Testis (tissue), 5 donors: ENCODE measurements at regions of chr16 and their contacts with region 1.

Region 1: DNA sequence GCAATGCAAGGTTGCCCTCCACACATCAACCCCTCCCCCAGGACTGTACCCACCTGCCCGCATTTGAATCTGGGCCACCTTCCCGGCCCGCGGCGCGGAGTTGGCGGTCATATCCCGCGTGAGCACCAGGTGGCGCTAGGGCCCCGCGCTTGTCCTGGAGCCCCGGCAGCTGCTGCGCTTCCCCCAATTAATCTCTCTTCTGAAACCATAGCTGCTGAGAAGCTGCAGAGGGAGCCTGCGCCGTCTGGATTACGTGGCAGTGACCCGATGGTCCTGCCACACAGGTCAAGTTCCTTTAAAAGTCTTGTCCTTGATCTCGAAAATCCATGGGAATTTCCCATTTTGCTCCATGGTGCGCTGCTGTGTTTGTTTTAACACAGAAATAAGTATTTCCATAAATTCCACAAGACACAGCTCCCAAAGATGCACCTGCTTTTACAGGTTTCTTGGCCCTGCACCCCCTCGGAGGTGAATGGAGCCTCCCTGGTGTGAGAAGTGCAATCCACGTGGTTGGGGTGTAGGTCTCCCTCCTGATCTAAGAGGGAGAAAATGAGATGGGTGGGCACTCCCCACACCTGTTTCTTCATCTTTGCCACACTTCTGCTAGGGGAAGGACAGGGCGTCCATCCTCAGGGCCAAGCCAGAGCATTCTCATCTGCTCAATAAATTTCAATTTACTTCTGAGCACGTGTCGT is 22.1 kb downstream of the COX4I1 start:
- DNase-seq: peak; percentile 88
- H3K4me3 ChIP-seq: no peak overlapping the region
- H3K27ac ChIP-seq: no peak overlapping the region
- H3K4me1 ChIP-seq: no peaks in the 10 kb centered on the region
- H3K27me3 ChIP-seq: no peaks in the 10 kb centered on the region
- CTCF ChIP-seq: peak; percentile 95 to 98 (median 96)
- POLR2A ChIP-seq: no peak

Region 2: GRCh38 chr16:85898521-85899442 is 77.2 kb after region 1 on chr16 and contains the start of gene IRF8:
- intact Hi-C with region 1: no loop called
- DNase-seq: peak; percentile 82
- H3K4me3 ChIP-seq: peak within 1 kb of the TSS; percentile 54 to 60
- H3K27ac ChIP-seq: peak within 1 kb of the TSS in 1 of 2 donors; percentile 66
- H3K4me1 ChIP-seq: peaks cover 5% of the 10 kb centered on the region
- H3K27me3 ChIP-seq: no peaks in the 10 kb centered on the region
- CTCF ChIP-seq: no peak
- POLR2A ChIP-seq: no peak
- total RNA-seq, gene IRF8: 14.0 to 15.0 TPM

Region 3: DNA sequence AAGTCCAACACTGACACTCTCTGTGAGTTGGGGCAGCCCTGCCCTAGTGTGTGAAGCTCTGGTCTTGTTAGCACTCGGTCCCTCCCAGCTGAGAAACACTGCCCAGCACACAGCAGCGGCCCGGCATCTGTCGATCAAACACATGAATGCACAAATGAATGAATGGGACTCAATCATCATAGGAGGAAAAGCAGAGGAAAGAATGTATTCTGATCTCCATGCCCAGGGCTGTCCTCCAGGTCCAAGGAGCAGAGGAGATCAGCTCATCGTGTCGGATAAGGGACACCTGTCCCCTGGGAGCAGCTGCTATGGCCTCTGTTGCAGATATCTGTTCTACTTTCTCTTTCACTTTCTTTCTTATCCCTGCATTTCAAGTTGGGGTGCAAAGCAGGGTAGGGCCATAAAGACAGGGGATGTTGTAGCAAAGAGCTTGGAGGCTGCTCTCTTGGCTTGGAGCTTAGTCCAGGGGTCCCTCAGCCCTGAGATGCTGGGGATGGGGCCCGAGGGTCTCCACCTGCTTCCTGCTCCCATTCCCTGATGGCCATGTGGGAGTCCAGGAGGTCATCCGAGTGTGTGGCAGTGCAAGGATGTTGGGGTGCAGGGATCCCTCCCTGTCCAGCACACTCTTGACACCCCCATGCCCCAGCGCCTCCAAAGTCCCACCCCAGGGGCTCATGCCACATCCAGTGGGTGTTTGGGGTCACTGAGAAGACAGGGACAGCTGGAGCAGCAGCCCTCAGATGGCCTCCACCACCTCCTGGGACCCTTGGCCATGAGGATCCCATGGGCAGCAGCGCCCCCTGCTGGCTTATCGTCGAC is 165.6 kb after region 1 on chr16:
- intact Hi-C with region 1: loop called (anchors 10 kb)
- DNase-seq: peak; percentile 19
- H3K4me3 ChIP-seq: no peak overlapping the region
- H3K27ac ChIP-seq: no peak overlapping the region
- H3K4me1 ChIP-seq: no peaks in the 10 kb centered on the region
- H3K27me3 ChIP-seq: no peaks in the 10 kb centered on the region
- CTCF ChIP-seq: peak in 2 of 3 experiments; percentile 19 to 58
- POLR2A ChIP-seq: no peak

Region 4: GRCh38 chr16:86016201-86016871 is 194.7 kb after region 1 on chr16:
- intact Hi-C with region 1: loop called (anchors 10 kb)
- DNase-seq: peak; percentile 54
- H3K4me3 ChIP-seq: no peak overlapping the region
- H3K27ac ChIP-seq: no peak overlapping the region
- H3K4me1 ChIP-seq: no peaks in the 10 kb centered on the region
- H3K27me3 ChIP-seq: no peaks in the 10 kb centered on the region
- CTCF ChIP-seq: peak; percentile 51 to 73 (median 73)
- POLR2A ChIP-seq: no peak

Region 5: DNA sequence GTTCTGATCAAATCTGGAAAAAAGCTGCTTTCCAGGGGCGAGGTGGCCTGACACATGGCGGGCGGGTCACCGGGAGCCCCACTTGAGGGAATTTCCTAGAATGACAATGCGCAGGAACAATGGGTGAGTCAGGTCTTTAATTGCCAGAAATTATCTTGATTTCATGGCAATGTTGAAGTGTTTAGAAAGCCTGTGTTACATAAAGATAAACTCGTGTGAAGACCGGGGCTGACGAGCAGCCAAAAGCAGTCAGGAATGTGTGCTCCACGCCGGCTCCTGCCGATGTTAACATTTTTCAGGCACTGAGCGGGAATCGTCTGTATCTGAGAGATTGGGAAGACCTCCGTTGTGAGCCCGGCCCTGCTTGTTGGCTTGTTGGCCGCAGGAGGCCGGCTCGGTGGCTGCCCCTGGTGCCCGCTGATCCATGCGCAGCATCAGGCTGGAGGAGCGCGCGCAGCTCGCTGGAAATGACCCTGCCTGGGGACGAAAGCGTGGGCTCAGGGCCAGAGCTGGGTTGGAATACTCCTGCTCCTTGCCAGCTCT is 1109.9 kb after region 1 on chr16:
- intact Hi-C with region 1: no loop called
- DNase-seq: peak; percentile 26
- H3K4me3 ChIP-seq: no peak overlapping the region
- H3K27ac ChIP-seq: peak overlapping the region in 1 of 2 donors; percentile 13
- H3K4me1 ChIP-seq: peaks cover 6% of the 10 kb centered on the region
- H3K27me3 ChIP-seq: no peaks in the 10 kb centered on the region
- CTCF ChIP-seq: no peak
- POLR2A ChIP-seq: no peak